ENCODE measurements at regions of chr11 and their contacts with region 1.

Region 1: GRCh38 chr11:114262681-114263512 is 33.3 kb upstream of the NNMT start:
- DNase-seq: no peak
- H3K4me3 ChIP-seq: no peak overlapping the region
- H3K27ac ChIP-seq: no peak overlapping the region
- H3K4me1 ChIP-seq: no peaks in the 10 kb centered on the region
- H3K27me3 ChIP-seq: no peaks in the 10 kb centered on the region
- CTCF ChIP-seq: peak; percentile 54

Region 2: DNA sequence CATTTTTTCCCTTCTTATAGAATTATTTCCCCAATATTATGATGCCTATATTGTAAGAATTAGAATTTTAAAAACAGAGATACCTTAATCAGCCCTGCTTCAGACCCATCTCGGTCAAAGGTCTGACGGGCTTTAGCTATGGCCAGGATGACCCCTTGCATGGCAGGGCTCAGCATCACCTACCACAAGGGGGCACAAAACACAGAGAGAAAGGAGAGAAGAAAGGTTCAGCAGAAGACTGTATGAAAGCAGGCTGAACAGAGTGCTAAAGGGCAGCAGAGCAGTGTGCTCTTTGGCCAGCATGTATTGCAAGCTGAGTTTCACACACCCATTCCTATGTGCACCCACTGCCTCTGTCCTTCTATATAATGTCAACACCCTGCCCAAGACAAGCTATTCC is 456.5 kb before region 1 on chr11:
- intact Hi-C with region 1: loop called (anchors 5 kb)
- DNase-seq: peak; percentile 26
- H3K4me3 ChIP-seq: no peak overlapping the region
- H3K27ac ChIP-seq: no peak overlapping the region
- H3K4me1 ChIP-seq: no peaks in the 10 kb centered on the region
- H3K27me3 ChIP-seq: no peaks in the 10 kb centered on the region
- CTCF ChIP-seq: peak; percentile 36

Region 3: GRCh38 chr11:113896156-113896879 is 366.6 kb before region 1 on chr11:
- intact Hi-C with region 1: loop called (anchors 2 kb)
- DNase-seq: peak; percentile 30
- H3K4me3 ChIP-seq: no peak overlapping the region
- H3K27ac ChIP-seq: no peak overlapping the region
- H3K4me1 ChIP-seq: no peaks in the 10 kb centered on the region
- H3K27me3 ChIP-seq: no peaks in the 10 kb centered on the region
- CTCF ChIP-seq: peak; percentile 69

Region 4: GRCh38 chr11:113994077-113994954 is 268.6 kb before region 1 on chr11:
- intact Hi-C with region 1: loop called (anchors 1 kb)
- DNase-seq: no peak
- H3K4me3 ChIP-seq: no peak overlapping the region
- H3K27ac ChIP-seq: no peak overlapping the region
- H3K4me1 ChIP-seq: no peaks in the 10 kb centered on the region
- H3K27me3 ChIP-seq: no peaks in the 10 kb centered on the region
- CTCF ChIP-seq: peak; percentile 55

Region 5: GRCh38 chr11:114036156-114036811 is 226.6 kb before region 1 on chr11:
- intact Hi-C with region 1: loop called (anchors 5 kb)
- DNase-seq: peak; percentile 86
- H3K4me3 ChIP-seq: peak overlapping the region; percentile 17
- H3K27ac ChIP-seq: peak overlapping the region; percentile 18
- H3K4me1 ChIP-seq: no peaks in the 10 kb centered on the region
- H3K27me3 ChIP-seq: no peaks in the 10 kb centered on the region
- CTCF ChIP-seq: peak; percentile 81

Region 6: DNA sequence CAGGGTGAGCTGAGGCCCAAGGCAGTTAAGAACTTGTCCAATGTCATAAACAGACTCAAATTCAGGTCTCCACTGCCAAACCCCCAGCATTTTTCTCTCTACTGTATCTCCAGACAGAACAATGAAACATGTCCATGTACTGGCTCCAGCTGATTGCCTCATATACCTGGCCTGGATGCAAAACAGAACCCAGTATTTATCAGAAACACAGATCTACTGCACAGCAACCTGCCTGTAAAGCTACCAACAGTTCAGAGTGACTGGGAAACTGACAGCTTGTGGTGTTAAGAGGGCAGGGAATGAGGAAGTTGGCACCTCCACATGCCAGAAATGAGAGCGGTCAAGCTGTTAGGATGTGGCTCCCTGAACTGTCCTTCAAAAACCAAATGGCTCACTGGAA is 95.8 kb after region 1 on chr11:
- intact Hi-C with region 1: no loop called
- DNase-seq: peak; percentile 18
- H3K4me3 ChIP-seq: no peak overlapping the region
- H3K27ac ChIP-seq: no peak overlapping the region
- H3K4me1 ChIP-seq: no peaks in the 10 kb centered on the region
- H3K27me3 ChIP-seq: no peaks in the 10 kb centered on the region
- CTCF ChIP-seq: no peak

Region 7: GRCh38 chr11:114416441-114416961 is 153.6 kb after region 1 on chr11:
- intact Hi-C with region 1: no loop called
- DNase-seq: no peak
- H3K4me3 ChIP-seq: no peak overlapping the region
- H3K27ac ChIP-seq: no peak overlapping the region
- H3K4me1 ChIP-seq: no peaks in the 10 kb centered on the region
- H3K27me3 ChIP-seq: no peaks in the 10 kb centered on the region
- CTCF ChIP-seq: no peak

Measured in colonic mucosa (tissue), 4 donors.